Prostate gland (tissue), 2 donors: ENCODE measurements at regions of chr11 and their contacts with region 1.

Region 1: GRCh38 chr11:118435893-118436624 is at the start of gene KMT2A:
- DNase-seq: peak; percentile 97
- H3K4me3 ChIP-seq: peak within 1 kb of the TSS; percentile 97
- H3K27ac ChIP-seq: peak within 1 kb of the TSS; percentile 96 to 97
- H3K4me1 ChIP-seq: peaks cover 5% of the 10 kb centered on the region
- H3K27me3 ChIP-seq: no peaks in the 10 kb centered on the region
- CTCF ChIP-seq: peak in 2 of 4 experiments; percentile 87 to 98
- POLR2A ChIP-seq: peak; percentile 42
- total RNA-seq, gene KMT2A: 82.6 to 89.0 TPM

Region 2: GRCh38 chr11:118227865-118228785 is 207.9 kb before region 1 on chr11:
- intact Hi-C with region 1: no loop called
- DNase-seq: no peak
- H3K4me3 ChIP-seq: no peak overlapping the region
- H3K27ac ChIP-seq: no peak overlapping the region
- H3K4me1 ChIP-seq: no peaks in the 10 kb centered on the region
- H3K27me3 ChIP-seq: no peaks in the 10 kb centered on the region
- CTCF ChIP-seq: no peak
- POLR2A ChIP-seq: no peak

Region 3: GRCh38 chr11:118240999-118241768 is 194.9 kb before region 1 on chr11:
- intact Hi-C with region 1: no loop called
- DNase-seq: peak; percentile 75
- H3K4me3 ChIP-seq: peak overlapping the region in 1 of 2 donors; percentile 11
- H3K27ac ChIP-seq: peak overlapping the region; percentile 77 to 80
- H3K4me1 ChIP-seq: no peaks in the 10 kb centered on the region
- H3K27me3 ChIP-seq: no peaks in the 10 kb centered on the region
- CTCF ChIP-seq: no peak
- POLR2A ChIP-seq: no peak

Region 4: DNA sequence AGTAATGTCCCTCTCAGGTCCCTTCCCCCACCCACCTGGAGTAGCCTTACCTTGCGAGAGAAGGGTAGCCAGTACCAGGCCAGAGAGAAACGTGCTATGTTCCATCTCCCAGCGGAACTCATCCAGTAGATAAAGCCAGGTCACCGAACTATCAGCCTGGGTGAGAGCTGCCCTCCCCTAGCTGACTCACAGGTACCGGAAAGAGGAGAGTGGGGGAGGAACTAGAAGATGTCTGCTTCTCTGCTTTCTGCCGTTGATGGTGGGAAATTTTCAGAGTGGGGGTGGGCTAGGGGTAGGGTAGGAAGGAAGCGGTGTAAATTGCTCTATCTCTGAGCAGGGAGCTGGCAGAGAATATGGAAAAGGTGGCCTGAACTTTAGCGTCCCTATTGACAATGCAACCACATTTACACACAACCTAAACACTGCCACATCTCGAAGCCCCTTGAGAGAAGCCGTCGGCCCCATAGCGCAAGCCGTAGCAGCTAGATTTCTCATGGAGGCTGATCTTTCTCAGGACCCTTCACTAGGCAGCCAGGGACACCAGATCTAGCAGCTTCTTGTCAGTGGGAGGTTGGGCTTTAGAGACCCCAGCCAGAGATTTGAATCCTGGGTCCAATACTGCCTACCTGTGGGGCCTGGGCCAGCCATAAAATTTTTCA is 93.4 kb before region 1 on chr11 and contains the start of gene CD3D:
- intact Hi-C with region 1: no loop called
- DNase-seq: no peak
- H3K4me3 ChIP-seq: no peak within 1 kb of the TSS
- H3K27ac ChIP-seq: no peak within 1 kb of the TSS
- H3K4me1 ChIP-seq: no peaks in the 10 kb centered on the region
- H3K27me3 ChIP-seq: no peaks in the 10 kb centered on the region
- CTCF ChIP-seq: no peak
- POLR2A ChIP-seq: no peak
- total RNA-seq, gene CD3D: 0.55 to 4.4 TPM

Region 5: DNA sequence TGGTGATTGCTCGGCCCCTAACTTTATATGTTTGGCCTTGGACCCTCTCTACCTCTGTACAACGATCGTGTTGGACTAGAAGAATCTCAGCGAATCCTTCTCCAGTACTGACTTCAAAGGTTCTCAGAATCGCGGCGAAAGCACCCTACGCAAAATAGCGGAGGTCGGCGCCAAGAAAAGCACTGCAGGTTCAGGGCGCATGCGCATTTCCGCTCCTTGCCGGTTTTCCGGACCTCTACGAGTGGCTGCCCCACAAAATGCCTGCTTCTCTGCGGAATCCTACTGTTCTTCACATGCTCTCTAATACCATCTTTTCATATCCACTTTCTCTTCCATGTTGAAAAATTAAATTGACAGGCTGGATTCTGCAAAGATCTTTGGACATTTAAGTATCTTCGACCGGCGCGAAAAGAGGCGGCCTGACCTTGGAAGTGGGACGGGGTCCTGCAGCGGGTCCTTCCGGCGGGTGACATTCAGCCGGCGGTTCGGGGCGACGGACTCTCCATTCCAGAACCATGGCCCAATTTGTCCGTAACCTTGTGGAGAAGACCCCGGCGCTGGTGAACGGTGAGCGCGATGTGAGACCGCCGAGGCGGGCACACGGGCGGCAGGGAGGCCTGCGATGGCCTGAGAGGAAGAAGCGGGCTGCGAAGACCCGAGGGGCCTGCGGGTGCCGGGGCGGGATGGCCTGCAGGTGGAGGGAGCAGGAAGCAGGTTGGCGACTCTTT is 34.7 kb before region 1 on chr11 and contains the start of gene ATP5MG:
- intact Hi-C with region 1: loop called (anchors 5 kb)
- DNase-seq: peak; percentile 81
- H3K4me3 ChIP-seq: peak within 1 kb of the TSS; percentile 65 to 83
- H3K27ac ChIP-seq: peak within 1 kb of the TSS; percentile 85 to 88
- H3K4me1 ChIP-seq: peaks cover 8% of the 10 kb centered on the region
- H3K27me3 ChIP-seq: no peaks in the 10 kb centered on the region
- CTCF ChIP-seq: no peak
- POLR2A ChIP-seq: peak; percentile 5
- total RNA-seq, gene ATP5MG: 32.9 to 66.4 TPM